Calu3 (cell line): ENCODE measurements at regions of chr15 and their contacts with region 1.

Region 1: GRCh38 chr15:39801641-39802309 is 19.1 kb upstream of the FSIP1 start:
- DNase-seq: peak; percentile 50
- H3K4me3 Mint-ChIP-seq: no peak overlapping the region
- H3K27ac Mint-ChIP-seq: no peak overlapping the region
- H3K4me1 Mint-ChIP-seq: peaks cover 8% of the 10 kb centered on the region
- H3K27me3 Mint-ChIP-seq: no peaks in the 10 kb centered on the region
- CTCF ChIP-seq: no peak

Region 2: DNA sequence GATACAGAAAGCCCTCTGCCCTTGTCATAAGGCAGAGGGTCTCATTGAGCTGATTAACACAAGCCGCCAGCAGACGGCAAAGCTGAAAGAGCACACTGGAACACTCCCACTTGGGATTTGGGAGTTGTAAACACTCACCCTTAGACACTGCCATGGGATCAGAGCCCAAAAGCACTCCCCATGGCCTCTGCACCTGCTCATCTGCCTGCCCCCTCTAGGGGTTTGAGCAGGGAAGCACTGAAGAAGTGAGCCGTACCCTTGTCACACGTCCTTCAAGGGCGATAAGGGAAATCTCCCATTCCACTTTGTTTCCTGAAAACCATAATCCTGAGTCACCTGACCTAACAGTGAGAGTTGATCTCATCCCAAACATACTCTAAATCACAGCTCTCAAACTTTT is 33.9 kb before region 1 on chr15:
- CTCF ChIA-PET with region 1: no interaction called
- intact Hi-C with region 1: no loop called
- DNase-seq: no peak
- H3K4me3 Mint-ChIP-seq: no peak overlapping the region
- H3K27ac Mint-ChIP-seq: no peak overlapping the region
- H3K4me1 Mint-ChIP-seq: no peaks in the 10 kb centered on the region
- H3K27me3 Mint-ChIP-seq: no peaks in the 10 kb centered on the region
- CTCF ChIP-seq: no peak

Region 3: GRCh38 chr15:39874890-39875549 is 73.2 kb after region 1 on chr15:
- CTCF ChIA-PET with region 1: no interaction called
- intact Hi-C with region 1: loop called (anchors 1 kb)
- DNase-seq: peak; percentile 10
- H3K4me3 Mint-ChIP-seq: no peak overlapping the region
- H3K27ac Mint-ChIP-seq: no peak overlapping the region
- H3K4me1 Mint-ChIP-seq: no peaks in the 10 kb centered on the region
- H3K27me3 Mint-ChIP-seq: no peaks in the 10 kb centered on the region
- CTCF ChIP-seq: no peak

Region 4: GRCh38 chr15:39934397-39935071 is 132.8 kb after region 1 on chr15:
- CTCF ChIA-PET with region 1: no interaction called
- intact Hi-C with region 1: loop called (anchors 5 kb)
- DNase-seq: no peak
- H3K4me3 Mint-ChIP-seq: peak overlapping the region; percentile 90
- H3K27ac Mint-ChIP-seq: peak overlapping the region; percentile 71
- H3K4me1 Mint-ChIP-seq: peaks cover 16% of the 10 kb centered on the region
- H3K27me3 Mint-ChIP-seq: no peaks in the 10 kb centered on the region
- CTCF ChIP-seq: no peak